Activated T-helper 2 cell treated with anti-CD3 and anti-CD28 coated beads, Interferon-gamma antibody, Interleukin-2, Interleukin-4, amounts not matched to agents 10 μg/mL and 5 μg/mL and 100 μg/mL, durations not matched to agents 14 hours and 24 hours and 36 hours (primary cell): ENCODE measurements at regions of chr17 and their contacts with region 1.

Region 1: GRCh38 chr17:47188876-47189731 is at the start of gene CDC27:
- DNase-seq: peak; percentile 100
- H3K4me3 Mint-ChIP-seq: peak within 1 kb of the TSS; percentile 98
- H3K27ac Mint-ChIP-seq: peak within 1 kb of the TSS; percentile 97
- H3K4me1 Mint-ChIP-seq: peaks cover 37% of the 10 kb centered on the region
- H3K27me3 Mint-ChIP-seq: no peaks in the 10 kb centered on the region
- total RNA-seq, gene CDC27: 102 and 109 TPM in 2 replicates

Region 2: DNA sequence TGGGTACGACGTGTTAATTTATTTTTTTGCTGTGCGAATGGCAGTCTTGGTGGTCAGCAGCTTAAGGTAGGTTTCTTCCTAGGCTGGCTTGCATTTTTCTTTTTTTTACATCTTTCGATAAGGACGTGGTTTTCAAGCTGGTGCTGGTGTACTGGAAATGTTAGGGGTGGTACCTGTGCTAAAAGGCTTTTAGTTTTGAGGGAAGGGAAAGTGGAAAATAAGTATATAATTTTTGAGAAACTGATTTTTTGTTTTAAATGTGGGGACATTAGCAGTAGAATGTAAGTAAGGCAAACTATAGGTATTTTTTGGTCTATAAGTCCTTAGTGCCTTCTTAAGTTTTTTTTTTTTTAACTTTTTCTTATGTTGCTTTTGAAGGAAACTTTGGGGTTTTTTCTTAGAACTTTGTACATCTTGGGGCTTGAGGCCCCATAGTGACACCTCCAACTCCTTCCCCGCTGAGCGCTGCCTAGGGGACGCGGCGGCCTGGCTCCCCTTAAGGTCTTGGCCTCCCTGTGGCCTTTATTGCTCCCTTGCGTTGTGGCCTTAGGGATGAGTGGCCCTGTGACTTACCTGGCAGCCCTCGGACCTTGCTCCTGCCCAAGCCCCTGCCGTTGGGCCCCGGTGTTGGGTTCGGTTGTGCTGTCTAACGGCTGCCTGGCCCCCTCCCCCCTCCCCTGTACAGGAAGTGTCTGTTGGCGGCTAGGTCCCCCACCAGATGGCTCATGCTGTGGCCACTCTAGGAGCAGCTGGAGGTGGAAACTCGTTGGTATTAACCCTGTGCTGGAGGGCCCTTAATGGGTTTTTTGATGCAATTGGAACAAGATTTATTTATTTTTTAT is 122.0 kb before region 1 on chr17:
- intact Hi-C with region 1: no loop called
- DNase-seq: peak; percentile 70
- H3K4me3 Mint-ChIP-seq: peak overlapping the region; percentile 97
- H3K27ac Mint-ChIP-seq: peak overlapping the region; percentile 95
- H3K4me1 Mint-ChIP-seq: peaks cover 29% of the 10 kb centered on the region
- H3K27me3 Mint-ChIP-seq: no peaks in the 10 kb centered on the region

Region 3: DNA sequence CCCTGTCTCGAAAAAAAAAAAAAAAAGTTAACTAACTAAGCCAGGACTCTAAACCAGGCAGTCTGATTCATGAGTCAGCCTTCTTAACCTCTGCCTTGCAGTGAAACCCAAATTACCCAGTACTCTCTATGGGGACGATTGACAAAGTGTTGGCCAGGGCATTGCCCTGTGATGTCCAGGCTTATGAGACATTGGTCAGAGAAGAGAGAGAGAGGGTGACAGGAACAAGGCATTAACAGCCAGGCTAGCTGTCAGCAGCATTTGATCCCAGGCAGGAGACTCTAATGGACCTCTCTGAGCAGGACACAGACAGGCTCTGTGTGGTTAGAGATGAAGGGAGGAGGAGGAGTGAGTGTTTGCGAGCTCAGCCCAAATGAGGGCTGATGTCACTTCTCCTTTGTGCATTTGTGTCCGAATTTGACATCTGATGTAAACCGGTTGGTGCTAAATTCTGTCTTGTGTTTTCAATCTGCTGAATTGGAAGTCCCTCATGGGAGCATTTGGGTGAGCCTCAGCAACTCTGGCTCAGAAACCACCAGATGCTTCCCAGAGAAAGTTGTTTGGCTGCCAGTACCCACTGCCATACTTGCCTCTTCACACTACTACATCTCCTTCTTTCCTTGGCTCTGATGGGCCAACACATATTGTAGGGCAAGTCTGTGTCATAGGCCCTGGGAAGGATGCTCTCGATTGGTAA is 15.8 kb after region 1 on chr17:
- intact Hi-C with region 1: loop called (anchors 1 kb)
- DNase-seq: peak; percentile 35
- H3K4me3 Mint-ChIP-seq: peak overlapping the region; percentile 32
- H3K27ac Mint-ChIP-seq: peak overlapping the region; percentile 93
- H3K4me1 Mint-ChIP-seq: peaks cover 42% of the 10 kb centered on the region
- H3K27me3 Mint-ChIP-seq: no peaks in the 10 kb centered on the region